ENCODE measurements at regions of chr14 and their contacts with region 1.

Region 1: GRCh38 chr14:34180460-34180868 is 229.6 kb upstream of the EGLN3 start:
- DNase-seq: peak; percentile 42
- ATAC-seq: peak; percentile 22; the same call in 1 of the 2 replicates
- H3K4me3 ChIP-seq: no peak overlapping the region
- H3K27ac ChIP-seq: no peak overlapping the region
- H3K4me1 ChIP-seq: peaks cover 9% of the 10 kb centered on the region; the same call in 1 of the 2 replicates
- H3K27me3 ChIP-seq: no peaks in the 10 kb centered on the region
- CTCF ChIP-seq: no peak

Region 2: DNA sequence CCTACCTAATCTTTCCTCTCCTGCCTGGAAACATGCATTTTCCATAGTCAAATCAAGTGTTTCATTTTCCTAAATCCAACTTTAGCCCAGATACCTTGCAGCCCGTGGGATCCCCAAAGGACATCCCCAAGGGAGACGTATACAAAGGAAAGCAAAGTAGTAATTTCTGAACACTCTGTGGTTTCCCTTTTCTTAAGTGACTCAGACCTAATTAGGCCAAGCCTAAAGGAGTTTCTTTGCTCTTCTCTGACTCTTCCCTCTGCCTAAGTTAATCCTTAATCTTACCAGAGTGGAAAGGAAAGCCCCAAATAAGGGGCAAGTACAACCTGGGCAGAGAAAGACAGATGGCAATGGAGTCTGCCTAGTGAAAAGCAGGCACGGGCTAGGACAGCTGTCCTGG is 31.3 kb after region 1 on chr14:
- CTCF ChIA-PET with region 1: no interaction called
- POLR2A ChIA-PET with region 1: no interaction called
- intact Hi-C with region 1: no loop called
- DNase-seq: peak; percentile 51
- ATAC-seq: peak; percentile 66
- H3K4me3 ChIP-seq: no peak overlapping the region
- H3K27ac ChIP-seq: no peak overlapping the region
- H3K4me1 ChIP-seq: peaks cover 21% of the 10 kb centered on the region
- H3K27me3 ChIP-seq: no peaks in the 10 kb centered on the region
- CTCF ChIP-seq: no peak

Region 3: DNA sequence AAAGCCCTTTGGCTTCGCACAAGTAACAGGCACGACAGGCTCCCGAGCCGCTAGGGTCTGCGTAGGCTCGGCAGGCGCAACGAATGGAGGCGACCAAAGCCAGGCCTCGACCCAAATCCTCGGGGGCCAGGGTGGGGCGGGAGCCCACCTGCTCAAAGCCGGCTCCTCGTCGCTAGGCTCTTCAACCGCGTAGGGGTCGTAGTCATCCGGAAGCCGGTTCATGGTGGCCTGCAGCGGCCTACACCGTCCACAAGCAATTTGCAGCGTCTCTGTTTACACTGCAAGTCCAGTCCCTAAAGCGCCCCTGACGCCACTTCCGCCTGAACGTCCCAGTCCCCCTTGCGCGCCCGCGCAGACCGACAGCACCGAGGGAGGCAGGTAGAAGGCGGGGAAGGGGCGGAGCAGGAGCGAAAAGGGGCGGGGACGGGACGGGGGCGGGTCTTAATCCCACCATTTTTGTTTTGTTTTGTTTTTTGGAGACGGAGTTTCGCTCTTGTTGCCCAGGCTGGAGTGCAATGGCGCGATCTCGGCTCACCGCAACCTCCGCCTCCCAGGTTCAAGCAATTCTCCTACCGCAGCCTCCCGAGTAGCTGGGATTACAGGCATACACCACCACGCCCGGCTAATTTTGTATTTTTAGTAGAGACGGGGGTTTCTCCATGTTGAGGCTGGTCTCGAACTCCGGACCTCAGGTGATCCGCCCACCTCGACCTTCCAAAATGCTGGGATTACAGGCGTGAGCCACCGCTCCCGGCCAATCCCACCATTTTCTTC is 359.1 kb after region 1 on chr14 and contains the start of gene EAPP:
- CTCF ChIA-PET with region 1: no interaction called
- POLR2A ChIA-PET with region 1: interaction called, 24 read pairs
- intact Hi-C with region 1: no loop called
- DNase-seq: peak; percentile 98
- ATAC-seq: peak; percentile 99
- H3K4me3 ChIP-seq: peak within 1 kb of the TSS; percentile 95
- H3K27ac ChIP-seq: peak within 1 kb of the TSS; percentile 50
- H3K4me1 ChIP-seq: peaks cover 8% of the 10 kb centered on the region; the same call in 1 of the 2 replicates
- H3K27me3 ChIP-seq: no peaks in the 10 kb centered on the region
- CTCF ChIP-seq: no peak
- total RNA-seq, gene EAPP: 38.2 and 49.5 TPM in 2 replicates